A673 (cell line): ENCODE measurements at regions of chr12 and their contacts with region 1.

Region 1: DNA sequence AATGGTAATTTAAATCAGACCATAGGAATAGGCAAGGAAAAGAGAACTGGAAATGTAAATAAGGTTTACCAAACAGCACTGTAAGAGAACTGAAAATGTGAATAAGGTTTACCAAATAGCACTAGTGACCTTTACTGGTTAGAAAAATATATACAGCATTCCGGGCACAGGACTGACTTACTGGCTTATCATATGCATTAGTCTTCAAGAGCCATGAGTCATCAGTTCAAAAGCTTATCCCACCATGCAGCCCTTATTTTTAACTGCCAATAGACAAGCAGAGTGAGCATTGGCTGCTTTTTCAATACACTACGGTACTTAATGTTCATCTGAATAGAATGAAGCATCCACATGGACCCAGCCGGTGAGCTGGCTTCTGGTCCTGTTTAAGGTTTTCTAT is 13.0 kb upstream of the NELL2 start:
- DNase-seq: peak; percentile 96
- H3K4me3 ChIP-seq: no peak overlapping the region
- H3K27ac ChIP-seq: peak overlapping the region; percentile 96
- H3K4me1 ChIP-seq: peaks cover 75% of the 10 kb centered on the region
- H3K27me3 ChIP-seq: no peaks in the 10 kb centered on the region
- CTCF ChIP-seq: no peak

Region 2: DNA sequence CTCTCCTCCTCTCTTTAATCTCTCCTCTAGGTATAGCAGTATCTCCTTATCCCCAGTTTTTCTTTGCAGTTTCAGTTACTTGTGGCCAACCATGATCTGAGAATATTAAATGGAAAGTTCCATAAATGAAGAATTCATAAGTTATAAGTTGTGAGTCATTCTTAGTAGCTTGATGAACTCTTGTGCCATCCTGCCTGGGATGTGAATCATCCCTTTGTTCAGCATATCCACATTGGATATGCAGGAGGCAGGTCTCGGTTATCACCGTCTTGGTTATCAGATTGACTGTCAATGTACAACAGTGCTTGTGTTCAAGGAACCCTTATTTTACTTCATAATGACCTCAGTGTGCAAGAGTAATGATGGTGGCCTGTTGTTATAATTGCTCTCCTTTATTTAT is 919.3 kb before region 1 on chr12:
- CTCF ChIA-PET with region 1: no interaction called
- POLR2A ChIA-PET with region 1: no interaction called
- intact Hi-C with region 1: loop called (anchors 2 kb)
- DNase-seq: no peak
- H3K4me3 ChIP-seq: no peak overlapping the region
- H3K27ac ChIP-seq: peak overlapping the region; percentile 38
- H3K4me1 ChIP-seq: peaks cover 54% of the 10 kb centered on the region
- H3K27me3 ChIP-seq: no peaks in the 10 kb centered on the region
- CTCF ChIP-seq: no peak

Region 3: DNA sequence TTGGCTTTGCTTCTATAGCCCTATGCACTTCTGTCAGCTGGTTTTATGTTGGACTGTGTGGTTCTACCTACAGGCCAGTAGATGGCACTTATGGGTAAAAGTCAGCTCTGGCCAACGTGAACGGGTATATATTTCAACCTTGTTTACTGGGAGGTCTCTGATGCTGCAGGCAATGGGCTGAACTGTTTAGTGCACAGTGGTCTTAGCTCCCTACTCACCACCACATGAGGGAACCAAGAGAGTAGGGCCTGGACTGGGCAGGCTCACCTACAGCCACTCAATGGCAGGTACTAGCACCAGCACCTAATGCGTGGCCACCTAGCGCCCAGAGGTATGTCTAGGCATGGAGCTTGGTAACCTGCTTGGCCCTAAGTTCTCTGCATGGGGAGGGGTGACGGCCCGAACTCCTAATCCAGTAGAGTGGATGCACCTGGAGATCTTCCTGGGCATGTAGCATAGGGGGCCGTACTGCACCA is 571.5 kb before region 1 on chr12:
- CTCF ChIA-PET with region 1: interaction called, 4 read pairs
- POLR2A ChIA-PET with region 1: no interaction called
- intact Hi-C with region 1: loop called (anchors 5 kb)
- DNase-seq: peak; percentile 81
- H3K4me3 ChIP-seq: no peak overlapping the region
- H3K27ac ChIP-seq: no peak overlapping the region
- H3K4me1 ChIP-seq: peaks cover 31% of the 10 kb centered on the region
- H3K27me3 ChIP-seq: no peaks in the 10 kb centered on the region
- CTCF ChIP-seq: peak; percentile 67

Region 4: GRCh38 chr12:44930972-44931600 is 41.9 kb after region 1 on chr12:
- CTCF ChIA-PET with region 1: no interaction called
- POLR2A ChIA-PET with region 1: no interaction called
- intact Hi-C with region 1: loop called (anchors 1 kb)
- DNase-seq: peak; percentile 96
- H3K4me3 ChIP-seq: no peak overlapping the region
- H3K27ac ChIP-seq: peak overlapping the region; percentile 81
- H3K4me1 ChIP-seq: peaks cover 27% of the 10 kb centered on the region
- H3K27me3 ChIP-seq: no peaks in the 10 kb centered on the region
- CTCF ChIP-seq: peak; percentile 67

Region 5: GRCh38 chr12:45122768-45123380 is 233.7 kb after region 1 on chr12:
- CTCF ChIA-PET with region 1: no interaction called
- POLR2A ChIA-PET with region 1: no interaction called
- intact Hi-C with region 1: loop called (anchors 5 kb)
- DNase-seq: peak; percentile 84
- H3K4me3 ChIP-seq: no peak overlapping the region
- H3K27ac ChIP-seq: no peak overlapping the region
- H3K4me1 ChIP-seq: peaks cover 5% of the 10 kb centered on the region
- H3K27me3 ChIP-seq: no peaks in the 10 kb centered on the region
- CTCF ChIP-seq: peak; percentile 90

Region 6: DNA sequence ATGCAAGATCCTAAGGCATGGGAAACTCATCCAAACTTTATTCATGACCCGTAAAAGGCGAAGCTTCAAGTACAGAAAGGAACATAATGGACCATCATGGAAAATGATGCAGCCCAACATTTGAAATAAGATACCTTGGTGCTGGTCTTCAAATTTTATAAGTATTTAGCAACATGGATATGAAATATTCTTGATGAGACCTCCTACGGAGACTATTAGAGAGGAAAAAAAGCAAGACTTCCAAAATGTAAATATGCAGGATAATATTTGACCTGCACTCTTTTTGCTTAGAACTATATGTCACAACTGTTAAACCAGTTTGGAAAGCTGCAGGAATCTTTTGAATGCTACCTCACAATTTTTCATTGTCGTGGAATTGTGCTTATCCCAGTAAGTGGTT is 671.5 kb after region 1 on chr12:
- CTCF ChIA-PET with region 1: interaction called, 3 read pairs
- POLR2A ChIA-PET with region 1: no interaction called
- intact Hi-C with region 1: loop called (anchors 5 kb)
- DNase-seq: peak; percentile 57
- H3K4me3 ChIP-seq: no peak overlapping the region
- H3K27ac ChIP-seq: peak overlapping the region; percentile 86
- H3K4me1 ChIP-seq: peaks cover 31% of the 10 kb centered on the region
- H3K27me3 ChIP-seq: no peaks in the 10 kb centered on the region
- CTCF ChIP-seq: no peak